HEK293 (cell line): ENCODE measurements at regions of chr9 and their contacts with region 1.

Region 1: GRCh38 chr9:91949946-91950664 is at the start of gene ROR2:
- H3K4me3 ChIP-seq: peak within 1 kb of the TSS; percentile 51
- H3K27ac ChIP-seq: peak within 1 kb of the TSS; percentile 72
- H3K4me1 ChIP-seq: peaks cover 11% of the 10 kb centered on the region
- CTCF ChIP-seq: peak; percentile 26; the same call in 1 of the 2 replicates

Region 2: GRCh38 chr9:90914868-90915483 is 1035.1 kb before region 1 on chr9:
- CTCF ChIA-PET with region 1: interaction called, 11 read pairs
- POLR2A ChIA-PET with region 1: no interaction called
- H3K4me3 ChIP-seq: no peak overlapping the region
- H3K27ac ChIP-seq: no peak overlapping the region
- H3K4me1 ChIP-seq: no peaks in the 10 kb centered on the region
- CTCF ChIP-seq: peak; percentile 83

Region 3: DNA sequence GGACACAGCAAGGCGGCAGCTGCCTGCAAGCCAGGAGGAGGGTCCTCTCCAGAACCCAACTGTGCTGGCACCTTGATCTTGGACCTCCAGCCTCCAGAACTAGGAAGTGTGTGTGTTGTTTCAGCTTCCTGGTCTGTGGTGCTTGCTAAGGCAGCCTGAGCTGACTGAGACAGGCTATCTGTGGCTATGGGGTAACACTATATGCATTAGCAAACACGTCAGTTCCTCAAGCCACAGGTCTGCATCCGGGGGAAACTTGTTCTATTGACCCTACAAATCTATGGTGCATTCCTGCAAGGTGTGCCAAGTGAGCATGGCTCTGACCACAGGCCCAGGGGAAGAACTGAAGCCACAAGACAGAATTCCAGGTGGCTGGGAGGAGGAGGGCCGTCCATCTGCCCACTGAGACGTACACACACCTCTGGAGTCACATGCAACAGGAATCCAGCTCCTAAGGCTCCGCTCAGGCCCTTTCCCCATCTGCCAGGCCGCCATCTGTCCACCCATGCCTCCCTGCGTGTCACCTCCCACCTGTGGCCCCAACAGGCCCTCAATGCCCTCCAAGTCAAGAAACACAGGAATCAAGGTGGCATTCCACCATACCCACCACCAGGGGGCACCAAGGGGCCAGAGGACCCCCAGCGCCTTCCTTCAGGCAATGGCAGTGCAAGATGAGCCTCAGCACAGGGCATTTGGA is 174.9 kb before region 1 on chr9:
- CTCF ChIA-PET with region 1: interaction called, 166 read pairs
- POLR2A ChIA-PET with region 1: interaction called, 3 read pairs
- H3K4me3 ChIP-seq: no peak overlapping the region
- H3K27ac ChIP-seq: no peak overlapping the region
- H3K4me1 ChIP-seq: no peaks in the 10 kb centered on the region
- CTCF ChIP-seq: peak; percentile 77

Region 4: DNA sequence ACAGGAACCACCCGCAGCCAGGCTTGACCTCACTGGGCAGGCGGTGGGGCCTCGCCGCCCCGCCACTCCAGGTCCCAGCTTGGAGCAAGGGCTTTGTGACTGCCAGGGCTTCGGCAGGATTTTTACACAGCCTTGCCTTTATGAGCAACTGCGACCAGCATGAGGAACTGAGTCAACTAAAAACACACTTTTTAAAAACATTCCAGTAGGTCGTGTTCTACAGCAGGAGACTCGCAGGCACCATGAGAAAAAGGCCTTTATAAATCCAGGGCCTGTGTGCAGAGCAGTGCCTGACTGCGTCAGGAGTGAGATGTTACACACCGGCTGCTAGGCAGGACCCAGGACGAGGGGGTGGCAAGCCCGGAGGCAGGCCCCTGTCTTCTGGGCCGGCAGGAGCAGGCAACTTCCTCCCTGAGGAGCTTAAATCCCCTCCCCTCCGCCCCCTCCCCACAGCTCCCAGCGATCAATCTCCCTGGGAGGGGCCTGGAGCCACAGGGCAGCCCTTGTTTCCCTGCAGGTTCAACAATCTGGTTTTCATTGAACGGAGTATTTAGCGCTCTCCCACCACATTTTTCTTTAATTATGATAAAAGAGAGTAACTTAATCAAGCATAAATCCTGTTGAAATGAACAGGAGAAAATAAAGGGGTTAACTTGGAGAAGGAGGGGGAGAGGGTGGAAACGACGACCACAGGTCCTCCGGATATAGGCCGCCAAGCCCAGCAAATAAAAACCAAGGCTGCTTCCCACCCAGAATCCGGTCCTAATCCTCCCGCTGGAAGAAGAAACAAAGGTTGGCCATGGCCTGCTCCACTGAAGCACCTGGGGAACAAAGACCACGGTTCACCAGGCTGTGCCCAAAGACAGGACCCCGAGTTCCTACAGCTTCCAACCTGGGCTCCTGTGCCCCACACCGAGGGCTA is 92.6 kb before region 1 on chr9:
- CTCF ChIA-PET with region 1: no interaction called
- POLR2A ChIA-PET with region 1: no interaction called
- H3K4me3 ChIP-seq: no peak overlapping the region
- H3K27ac ChIP-seq: no peak overlapping the region
- H3K4me1 ChIP-seq: no peaks in the 10 kb centered on the region; the same call in 1 of the 2 replicates
- CTCF ChIP-seq: no peak

Region 5: DNA sequence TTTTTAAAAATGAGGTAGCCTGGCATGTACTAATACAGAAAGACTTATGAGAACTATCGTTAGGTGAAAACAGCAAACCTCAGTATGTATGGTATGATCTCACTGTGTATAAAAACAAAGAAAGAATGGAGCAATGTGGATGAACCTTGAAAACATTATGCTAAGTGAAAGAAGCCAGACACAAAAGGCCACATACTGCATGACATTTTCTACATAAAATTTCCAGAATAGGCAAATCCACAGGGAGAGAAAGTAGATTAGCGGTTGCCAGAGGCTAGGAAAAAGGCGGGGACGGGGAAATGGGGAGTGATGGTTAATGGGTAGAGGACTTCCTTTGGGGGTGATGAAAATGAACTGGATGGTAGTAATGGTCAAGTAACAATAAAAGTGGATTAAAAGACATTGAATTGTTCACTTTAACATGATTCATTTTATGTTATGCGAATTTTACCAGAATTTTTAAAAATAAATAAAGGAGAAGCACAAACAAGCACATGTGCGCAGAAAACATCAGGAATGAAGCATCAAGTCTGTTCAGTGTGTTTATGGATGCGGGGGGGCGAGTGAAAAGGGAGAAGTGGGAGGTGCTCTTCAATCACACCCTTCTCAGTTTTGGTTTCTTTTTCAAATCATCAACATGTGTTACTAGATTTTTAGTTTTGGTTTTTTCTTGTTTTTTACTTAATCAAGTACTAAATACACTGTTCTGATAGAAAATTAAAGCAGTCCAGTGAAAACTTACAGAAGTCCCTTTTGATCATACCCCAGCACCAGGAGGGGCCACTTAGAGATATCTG is 16.4 kb before region 1 on chr9:
- CTCF ChIA-PET with region 1: interaction called, 18 read pairs
- POLR2A ChIA-PET with region 1: interaction called, 4 read pairs
- H3K4me3 ChIP-seq: no peak overlapping the region
- H3K27ac ChIP-seq: no peak overlapping the region
- H3K4me1 ChIP-seq: no peaks in the 10 kb centered on the region
- CTCF ChIP-seq: no peak

Region 6: GRCh38 chr9:91978739-91979414 is 28.8 kb after region 1 on chr9:
- CTCF ChIA-PET with region 1: interaction called, 46 read pairs
- POLR2A ChIA-PET with region 1: no interaction called
- H3K4me3 ChIP-seq: no peak overlapping the region
- H3K27ac ChIP-seq: no peak overlapping the region
- H3K4me1 ChIP-seq: no peaks in the 10 kb centered on the region
- CTCF ChIP-seq: no peak; the same call in 1 of the 2 replicates

Region 7: GRCh38 chr9:92308893-92309292 is 358.8 kb after region 1 on chr9:
- CTCF ChIA-PET with region 1: no interaction called
- POLR2A ChIA-PET with region 1: no interaction called
- H3K4me3 ChIP-seq: no peak overlapping the region
- H3K27ac ChIP-seq: no peak overlapping the region
- H3K4me1 ChIP-seq: no peaks in the 10 kb centered on the region
- CTCF ChIP-seq: no peak